ENCODE measurements at regions of chr15 and their contacts with region 1.

Region 1: DNA sequence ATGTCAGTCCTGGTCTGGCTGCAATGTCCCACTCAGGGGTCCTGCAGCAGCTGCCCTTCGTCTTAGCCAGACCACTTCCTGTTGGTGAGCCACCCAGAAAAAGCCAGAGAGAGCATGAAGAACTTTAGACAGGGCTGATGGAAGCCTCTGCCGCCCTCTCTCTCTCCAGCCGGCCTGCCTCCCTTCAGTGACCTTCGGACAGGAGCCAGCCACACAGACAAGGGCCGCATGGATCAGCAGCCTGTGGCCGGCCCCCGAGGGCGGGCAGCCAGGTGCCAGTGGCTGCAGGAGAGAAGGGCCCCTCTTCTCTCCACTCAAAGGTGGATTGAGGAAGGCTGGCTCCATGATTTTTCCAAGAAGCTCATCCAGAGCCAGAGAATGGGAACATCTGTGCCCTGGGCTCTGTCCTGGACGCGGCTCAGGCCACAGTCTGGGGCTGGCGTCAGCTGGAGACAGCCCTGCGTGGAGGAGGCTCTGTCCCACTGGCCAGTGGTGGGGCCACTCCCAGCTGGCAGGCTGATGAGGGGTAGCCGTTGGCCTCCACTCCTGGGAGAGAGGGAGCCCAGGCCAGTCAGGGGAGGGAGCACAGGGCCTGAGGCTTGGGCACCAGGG is 42.9 kb downstream of the ISG20 start:
- DNase-seq: no peak
- ATAC-seq: peak; percentile 56

Region 2: DNA sequence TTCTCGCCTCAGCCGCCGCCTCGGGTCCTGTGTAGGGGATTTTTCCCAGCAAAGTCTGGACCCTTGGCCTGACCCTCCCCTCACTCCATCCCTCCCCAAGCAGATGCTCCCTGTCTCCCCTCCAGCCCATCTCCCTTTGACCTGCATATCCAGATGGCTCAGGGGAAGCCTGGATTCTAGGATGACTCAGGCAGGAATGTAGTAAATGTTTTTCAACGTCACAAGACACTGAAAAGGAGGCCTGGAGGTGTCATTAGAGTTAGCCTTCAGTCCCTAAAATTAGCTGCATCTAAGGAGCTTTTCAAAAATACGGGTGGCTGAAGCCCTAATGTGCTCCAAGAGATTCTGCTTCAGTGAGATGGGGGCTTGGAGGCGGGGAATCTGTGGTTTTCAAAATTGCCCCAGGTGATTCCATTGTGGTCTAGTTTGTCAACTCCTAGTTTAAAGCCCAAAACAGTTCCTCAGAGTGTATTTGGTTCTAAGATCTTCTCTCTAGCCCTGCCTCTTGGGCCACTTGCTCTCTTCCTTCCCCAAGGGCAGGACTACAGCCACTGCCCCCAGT is 128.8 kb after region 1 on chr15:
- intact Hi-C with region 1: loop called (anchors 10 kb)
- DNase-seq: no peak
- ATAC-seq: no peak